ENCODE measurements at regions of chr5 and their contacts with region 1.

Region 1: GRCh38 chr5:138542956-138543729 is at the start of gene ETF1:
- DNase-seq: peak; percentile 100
- H3K4me3 Mint-ChIP-seq: peak within 1 kb of the TSS; percentile 99
- H3K27ac Mint-ChIP-seq: peak within 1 kb of the TSS; percentile 100
- H3K4me1 Mint-ChIP-seq: peaks cover 54% of the 10 kb centered on the region
- H3K27me3 Mint-ChIP-seq: no peaks in the 10 kb centered on the region
- total RNA-seq, gene ETF1: 201 and 219 TPM in 2 replicates

Region 2: DNA sequence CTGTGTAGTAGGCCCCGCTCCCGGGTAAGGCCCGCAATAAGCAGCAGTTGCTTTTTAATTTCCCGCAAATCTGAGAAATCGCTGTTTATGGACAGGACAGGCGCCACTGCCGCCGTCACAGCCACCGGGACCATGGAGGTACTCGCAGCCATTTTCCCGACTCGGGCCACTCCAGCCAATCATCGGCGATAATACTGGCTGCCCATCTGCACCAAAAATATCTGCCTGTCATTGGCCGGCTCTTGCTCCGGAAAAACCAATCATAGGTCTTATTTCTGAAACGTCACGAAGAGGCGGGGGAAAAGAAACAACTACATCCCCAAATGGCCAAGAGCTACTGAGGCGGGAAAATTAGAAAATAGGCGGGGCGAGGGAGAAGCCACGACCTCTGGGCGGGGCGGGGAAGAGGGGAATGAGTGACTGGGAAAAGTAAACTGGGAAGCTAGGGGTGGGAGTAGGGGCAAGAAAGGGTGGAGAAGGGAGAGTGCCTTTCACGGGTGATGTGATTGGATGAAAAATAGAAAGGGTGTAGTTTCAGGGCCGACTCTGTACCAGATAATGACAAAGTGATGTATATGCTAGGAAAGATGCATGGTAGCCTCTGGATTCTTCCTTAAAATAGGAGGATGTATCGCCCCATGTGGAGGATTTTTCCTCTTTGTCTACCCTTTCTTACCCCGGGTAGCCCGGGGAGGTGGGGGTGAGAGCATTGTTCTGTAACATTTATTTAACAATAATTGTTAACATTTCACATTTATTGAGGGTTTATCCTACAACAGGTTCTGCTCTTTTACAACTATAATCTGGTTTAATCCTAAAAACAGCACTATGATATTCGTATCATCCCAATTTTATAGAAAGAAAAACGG is 329.7 kb before region 1 on chr5 and contains the start of gene CDC23:
- intact Hi-C with region 1: loop called (anchors 1 kb)
- DNase-seq: peak; percentile 89
- H3K4me3 Mint-ChIP-seq: peak within 1 kb of the TSS; percentile 96
- H3K27ac Mint-ChIP-seq: peak within 1 kb of the TSS; percentile 93
- H3K4me1 Mint-ChIP-seq: peaks cover 24% of the 10 kb centered on the region
- H3K27me3 Mint-ChIP-seq: no peaks in the 10 kb centered on the region
- total RNA-seq, gene CDC23: 48.0 and 50.4 TPM in 2 replicates

Region 3: DNA sequence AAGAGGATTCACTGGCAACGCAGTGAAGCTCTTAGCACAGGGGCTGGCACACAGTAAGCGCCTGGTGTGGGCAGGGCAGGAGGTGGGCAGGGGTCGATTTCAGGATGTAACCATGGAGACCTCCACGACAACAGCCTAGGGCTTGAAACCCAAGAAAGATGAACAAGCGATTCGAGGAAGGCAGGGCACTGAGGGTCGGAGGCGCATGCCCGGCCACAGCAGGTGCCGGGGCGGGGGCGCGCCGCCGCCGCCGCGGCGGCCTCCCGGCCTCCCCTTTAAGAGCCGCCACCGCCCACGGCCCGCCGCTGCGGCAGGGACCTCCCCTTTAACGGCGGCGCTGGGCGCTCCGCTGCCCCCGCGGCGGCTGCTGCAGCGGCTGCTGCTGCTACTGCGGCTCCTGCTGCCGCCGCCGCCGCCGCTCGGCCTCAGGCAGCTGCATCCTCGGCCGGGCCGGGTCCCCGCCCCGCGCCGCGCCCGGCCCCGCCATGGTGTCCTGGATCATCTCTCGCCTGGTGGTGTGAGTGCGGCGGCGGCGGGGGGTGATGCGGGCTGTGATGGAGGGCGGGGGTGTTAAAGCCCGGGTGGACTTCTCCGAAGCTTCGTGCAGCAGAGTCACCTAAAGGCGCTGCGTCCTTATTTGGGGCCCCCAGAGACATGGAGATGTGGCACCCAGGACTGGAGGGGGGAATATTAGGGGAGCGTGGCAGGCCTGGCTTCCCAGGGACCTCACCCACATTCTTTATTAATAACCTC is 104.2 kb before region 1 on chr5 and contains the start of gene REEP2:
- intact Hi-C with region 1: loop called (anchors 1 kb)
- DNase-seq: peak; percentile 53
- H3K4me3 Mint-ChIP-seq: peak within 1 kb of the TSS; percentile 77
- H3K27ac Mint-ChIP-seq: peak within 1 kb of the TSS; percentile 67
- H3K4me1 Mint-ChIP-seq: peaks cover 13% of the 10 kb centered on the region
- H3K27me3 Mint-ChIP-seq: peaks cover 6% of the 10 kb centered on the region
- total RNA-seq, gene REEP2: 5.1 and 5.4 TPM in 2 replicates

Region 4: GRCh38 chr5:138575194-138576015 is 32.3 kb after region 1 on chr5 and contains the start of gene HSPA9:
- intact Hi-C with region 1: loop called (anchors 1 kb)
- DNase-seq: peak; percentile 97
- H3K4me3 Mint-ChIP-seq: peak within 1 kb of the TSS; percentile 95
- H3K27ac Mint-ChIP-seq: peak within 1 kb of the TSS; percentile 100
- H3K4me1 Mint-ChIP-seq: peaks cover 22% of the 10 kb centered on the region
- H3K27me3 Mint-ChIP-seq: no peaks in the 10 kb centered on the region
- total RNA-seq, gene HSPA9: 372 and 383 TPM in 2 replicates

Region 5: GRCh38 chr5:138784590-138784989 is 241.4 kb after region 1 on chr5:
- intact Hi-C with region 1: no loop called
- DNase-seq: no peak
- H3K4me3 Mint-ChIP-seq: no peak overlapping the region
- H3K27ac Mint-ChIP-seq: no peak overlapping the region
- H3K4me1 Mint-ChIP-seq: peaks cover under 1% of the 10 kb centered on the region
- H3K27me3 Mint-ChIP-seq: no peaks in the 10 kb centered on the region

Region 6: GRCh38 chr5:139014726-139015125 is 471.6 kb after region 1 on chr5:
- intact Hi-C with region 1: no loop called
- DNase-seq: no peak
- H3K4me3 Mint-ChIP-seq: no peak overlapping the region
- H3K27ac Mint-ChIP-seq: no peak overlapping the region
- H3K4me1 Mint-ChIP-seq: no peaks in the 10 kb centered on the region
- H3K27me3 Mint-ChIP-seq: no peaks in the 10 kb centered on the region

Region 7: GRCh38 chr5:139293504-139294373 is 750.6 kb after region 1 on chr5 and contains the start of gene MATR3:
- intact Hi-C with region 1: loop called (anchors 1 kb)
- DNase-seq: peak; percentile 88
- H3K4me3 Mint-ChIP-seq: peak within 1 kb of the TSS; percentile 95
- H3K27ac Mint-ChIP-seq: peak within 1 kb of the TSS; percentile 94
- H3K4me1 Mint-ChIP-seq: peaks cover 37% of the 10 kb centered on the region
- H3K27me3 Mint-ChIP-seq: no peaks in the 10 kb centered on the region
- total RNA-seq, gene MATR3: 232 and 258 TPM in 2 replicates